ENCODE measurements at regions of chr7 and their contacts with region 1.

Region 1: GRCh38 chr7:786472-787255 is 45.6 kb upstream of the SUN1 start:
- DNase-seq: peak; percentile 40 to 73
- ATAC-seq: peak; percentile 66 to 86
- H3K4me3 ChIP-seq: no peak overlapping the region
- H3K27ac ChIP-seq: no peak overlapping the region
- H3K4me1 ChIP-seq: peaks cover 5 to 10% of the 10 kb centered on the region in 2 donors
- H3K27me3 ChIP-seq: no peaks in the 10 kb centered on the region
- CTCF ChIP-seq: peak; percentile 86 to 94 (median 91)
- POLR2A ChIP-seq: no peak

Region 2: DNA sequence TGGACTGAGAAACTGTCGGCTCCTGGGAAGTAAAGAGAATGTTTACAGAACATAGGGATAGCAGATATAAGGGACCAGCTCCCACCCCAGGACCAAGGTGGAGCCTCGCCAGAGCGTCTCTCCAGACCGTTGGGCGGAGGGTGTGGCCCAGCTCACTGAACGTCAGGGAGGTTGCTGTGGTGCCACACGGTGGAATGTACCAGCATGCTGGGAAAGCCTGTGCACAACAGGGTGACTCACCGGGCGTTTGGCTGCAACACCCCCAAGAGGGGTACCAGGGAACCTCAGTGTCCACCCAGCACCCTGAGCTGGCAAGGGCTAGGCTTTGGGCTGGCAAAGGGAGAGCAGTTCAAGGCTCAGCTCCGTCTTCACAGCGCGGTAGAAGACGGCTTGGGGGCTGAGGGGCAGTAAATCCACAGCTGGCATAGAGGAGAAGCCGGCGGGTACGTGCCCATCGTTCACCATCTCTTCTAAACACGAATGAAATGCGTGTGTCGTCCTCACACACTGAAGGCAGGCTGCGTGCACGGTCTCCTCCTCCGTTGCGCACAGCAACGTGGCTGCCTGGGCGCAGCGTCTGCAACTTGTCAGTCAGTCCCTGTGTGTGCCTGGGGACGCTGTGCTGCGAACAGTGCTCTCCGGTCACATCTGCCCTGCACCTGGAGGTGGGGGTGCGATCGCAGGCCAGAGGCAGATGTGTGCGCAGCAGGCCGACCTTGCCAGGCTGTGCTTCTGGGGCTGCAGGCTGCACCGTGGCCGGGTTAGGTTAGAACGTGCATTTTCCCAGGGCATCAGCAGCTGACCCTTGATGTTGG is 81.2 kb after region 1 on chr7:
- in situ Hi-C with region 1: loop called (anchors 5 to 10 kb)
- intact Hi-C with region 1: loop called (anchors 1 kb)
- DNase-seq: peak; percentile 44 to 75
- ATAC-seq: peak; percentile 49 to 80
- H3K4me3 ChIP-seq: no peak overlapping the region
- H3K27ac ChIP-seq: peak overlapping the region; percentile 76 to 84 (median 78)
- H3K4me1 ChIP-seq: peaks cover 9 to 13% of the 10 kb centered on the region in 2 donors
- H3K27me3 ChIP-seq: no peaks in the 10 kb centered on the region
- CTCF ChIP-seq: no peak
- POLR2A ChIP-seq: no peak

Region 3: DNA sequence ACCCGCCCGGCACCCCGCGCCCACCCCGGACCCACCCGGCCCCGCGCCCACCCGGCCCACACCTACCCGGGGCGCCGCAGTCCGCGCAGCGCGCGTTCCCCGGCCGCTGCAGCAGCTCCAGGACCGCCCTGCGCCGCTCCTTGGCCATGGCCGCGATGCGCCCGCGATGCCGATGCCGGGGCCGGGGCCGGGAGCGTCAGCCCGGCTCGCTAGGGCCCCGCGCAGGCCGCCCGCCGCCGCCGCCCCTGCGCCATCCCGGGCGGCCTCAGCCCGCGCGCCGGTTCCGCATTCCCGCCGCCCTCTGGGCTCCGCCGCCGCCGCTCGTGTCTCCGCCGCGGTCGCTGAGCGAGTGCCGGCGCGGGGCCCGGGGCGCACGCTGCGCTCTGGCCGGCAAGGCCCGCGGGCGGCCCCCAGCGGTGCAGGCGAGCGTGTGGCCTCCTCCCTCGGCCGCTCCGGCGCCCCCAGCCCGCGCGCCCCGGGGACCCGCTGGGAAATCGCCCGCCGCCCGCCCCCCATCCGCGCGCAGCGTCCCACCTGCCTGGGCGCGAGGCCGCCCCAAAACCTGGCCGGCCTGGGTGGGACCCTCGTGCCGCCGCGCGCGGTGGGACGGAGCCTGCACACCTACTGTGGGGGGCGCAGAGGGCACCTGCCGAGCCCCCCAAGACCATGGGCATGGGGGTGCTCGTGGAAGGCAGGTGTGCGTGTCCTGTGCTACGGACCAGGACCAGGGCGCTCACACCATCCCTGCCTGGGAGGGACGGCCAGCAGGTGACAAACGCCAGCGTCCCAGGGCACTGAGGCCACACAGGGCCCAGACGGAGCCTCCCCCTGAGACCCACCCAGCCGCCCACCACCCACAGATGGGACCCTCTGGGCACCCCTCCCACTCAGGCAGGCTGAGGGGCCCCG is 167.9 kb after region 1 on chr7 and contains the start of gene ADAP1:
- in situ Hi-C with region 1: no loop called
- intact Hi-C with region 1: loop called (anchors 10 kb)
- DNase-seq: no peak
- ATAC-seq: peak in 1 of 2 donors; percentile 54
- H3K4me3 ChIP-seq: peak within 1 kb of the TSS; percentile 30 to 44 (median 39)
- H3K27ac ChIP-seq: no peak within 1 kb of the TSS
- H3K4me1 ChIP-seq: peaks cover 0 to 7% of the 10 kb centered on the region in 2 donors
- H3K27me3 ChIP-seq: peaks cover 26 to 38% (median 30%) of the 10 kb centered on the region in 3 donors
- CTCF ChIP-seq: peak in 1 of 5 experiments; percentile 19
- POLR2A ChIP-seq: no peak
- total RNA-seq, gene ADAP1: 0.71 to 5.0 (median 1.1) TPM